ENCODE measurements at regions of chr11 and their contacts with region 1.

Region 1: GRCh38 chr11:65779851-65780577 is 762 bp downstream of the AP5B1 start:
- DNase-seq: peak; percentile 78
- H3K4me3 Mint-ChIP-seq: peak overlapping the region; percentile 96
- H3K27ac Mint-ChIP-seq: peak overlapping the region; percentile 93
- H3K4me1 Mint-ChIP-seq: no peaks in the 10 kb centered on the region
- H3K27me3 Mint-ChIP-seq: no peaks in the 10 kb centered on the region
- CTCF ChIP-seq: peak; percentile 99

Region 2: DNA sequence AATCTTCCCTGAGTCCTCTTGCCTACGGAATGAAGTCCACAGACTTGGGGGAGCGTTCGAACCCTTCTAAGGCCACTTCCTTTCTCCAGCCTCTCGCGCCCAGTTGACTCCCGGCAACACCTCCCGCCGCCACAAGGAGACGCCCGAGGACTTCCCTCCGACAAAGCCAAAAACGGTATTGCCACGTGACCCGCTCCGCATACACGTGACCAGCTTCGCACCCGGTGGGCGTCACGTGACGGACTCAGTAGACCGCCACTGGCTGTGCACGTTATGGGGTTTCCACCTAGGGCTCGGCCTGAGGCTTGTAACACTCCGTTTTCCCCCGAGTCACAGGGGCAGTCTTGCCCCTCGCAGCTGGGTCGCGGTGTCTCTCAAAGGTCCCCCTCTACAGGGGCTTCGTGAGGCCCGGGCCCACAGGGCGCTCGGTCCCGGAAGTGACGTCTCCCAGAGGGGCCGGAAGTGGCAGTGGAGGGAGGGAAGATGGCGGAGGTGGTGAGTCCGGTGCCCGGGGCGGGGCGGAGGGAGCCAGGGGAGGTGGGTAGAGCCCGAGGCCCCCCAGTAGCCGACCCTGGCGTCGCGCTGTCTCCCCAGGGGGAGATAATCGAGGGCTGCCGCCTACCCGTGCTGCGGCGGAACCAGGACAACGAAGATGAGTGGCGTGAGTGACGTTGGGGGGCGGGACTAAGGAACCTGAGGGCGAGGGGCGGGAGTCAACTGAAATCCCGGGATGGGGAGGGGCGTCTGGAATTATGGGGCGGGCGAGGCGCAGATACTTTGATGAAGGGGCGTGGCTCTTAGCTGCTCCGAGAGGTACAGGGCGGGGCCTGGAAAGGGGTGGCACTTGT is 68.0 kb before region 1 on chr11 and contains the start of gene KAT5:
- CTCF ChIA-PET with region 1: interaction called, 22 read pairs
- POLR2A ChIA-PET with region 1: interaction called, 33 read pairs
- intact Hi-C with region 1: no loop called
- DNase-seq: peak; percentile 98
- H3K4me3 Mint-ChIP-seq: peak within 1 kb of the TSS; percentile 80
- H3K27ac Mint-ChIP-seq: peak within 1 kb of the TSS; percentile 99
- H3K4me1 Mint-ChIP-seq: no peaks in the 10 kb centered on the region
- H3K27me3 Mint-ChIP-seq: no peaks in the 10 kb centered on the region
- CTCF ChIP-seq: peak; percentile 95
- total RNA-seq, gene KAT5: 37.6 and 48.1 TPM in 2 replicates

Region 3: DNA sequence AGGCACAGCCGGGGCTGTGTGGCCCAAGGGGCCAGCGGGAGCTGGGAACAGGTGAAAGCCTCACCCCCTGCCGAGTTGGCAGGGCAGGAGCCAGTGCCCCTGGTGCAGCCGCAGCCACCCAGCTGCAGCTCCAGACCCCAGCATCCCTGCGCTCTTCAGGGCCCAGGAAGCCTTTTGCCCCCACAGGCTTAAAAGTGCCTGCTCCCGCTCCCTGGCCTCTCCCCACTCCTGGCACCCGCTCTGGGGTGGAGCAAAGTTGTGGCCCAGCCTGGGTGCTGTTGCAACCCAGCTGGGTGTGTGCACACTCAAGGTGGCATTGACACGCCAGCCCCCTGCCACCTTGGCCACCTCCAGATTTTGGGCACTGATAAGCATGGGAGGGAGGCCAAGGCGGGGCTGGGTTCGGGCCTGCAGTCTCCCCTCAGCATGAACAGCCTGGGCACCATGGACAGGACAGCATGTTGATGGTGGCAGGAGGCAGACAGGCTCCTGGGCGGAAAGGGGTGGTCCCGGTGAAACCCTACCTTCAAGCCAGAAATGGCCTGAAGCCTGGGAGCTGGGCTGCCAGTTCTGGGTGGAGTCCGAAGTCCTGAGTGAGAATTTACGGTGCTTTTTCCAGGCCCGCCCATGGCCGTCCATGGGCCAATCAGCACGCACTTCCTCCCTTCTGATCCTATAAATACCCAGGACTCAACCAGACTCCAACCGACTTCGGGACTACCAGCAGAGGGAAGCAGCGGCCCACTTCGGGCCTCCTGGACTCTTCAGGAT is 35.9 kb before region 1 on chr11:
- CTCF ChIA-PET with region 1: interaction called, 16 read pairs
- POLR2A ChIA-PET with region 1: interaction called, 4 read pairs
- intact Hi-C with region 1: no loop called
- DNase-seq: peak; percentile 73
- H3K4me3 Mint-ChIP-seq: no peak overlapping the region
- H3K27ac Mint-ChIP-seq: no peak overlapping the region
- H3K4me1 Mint-ChIP-seq: no peaks in the 10 kb centered on the region
- H3K27me3 Mint-ChIP-seq: peaks cover 38% of the 10 kb centered on the region
- CTCF ChIP-seq: no peak

Region 4: GRCh38 chr11:65791691-65792213 is 11.7 kb after region 1 on chr11:
- CTCF ChIA-PET with region 1: interaction called, 41 read pairs
- POLR2A ChIA-PET with region 1: interaction called, 25 read pairs
- intact Hi-C with region 1: no loop called
- DNase-seq: no peak
- H3K4me3 Mint-ChIP-seq: no peak overlapping the region
- H3K27ac Mint-ChIP-seq: no peak overlapping the region
- H3K4me1 Mint-ChIP-seq: peaks cover 7% of the 10 kb centered on the region
- H3K27me3 Mint-ChIP-seq: peaks cover 13% of the 10 kb centered on the region
- CTCF ChIP-seq: no peak

Region 5: GRCh38 chr11:65817835-65818742 is 38.1 kb after region 1 on chr11:
- CTCF ChIA-PET with region 1: interaction called, 98 read pairs
- POLR2A ChIA-PET with region 1: interaction called, 39 read pairs
- intact Hi-C with region 1: loop called (anchors 1 kb)
- DNase-seq: peak; percentile 81
- H3K4me3 Mint-ChIP-seq: peak overlapping the region; percentile 80
- H3K27ac Mint-ChIP-seq: peak overlapping the region; percentile 78
- H3K4me1 Mint-ChIP-seq: peaks cover 4% of the 10 kb centered on the region
- H3K27me3 Mint-ChIP-seq: no peaks in the 10 kb centered on the region
- CTCF ChIP-seq: peak; percentile 99

Region 6: GRCh38 chr11:65988791-65989592 is 209.0 kb after region 1 on chr11:
- CTCF ChIA-PET with region 1: no interaction called
- POLR2A ChIA-PET with region 1: no interaction called
- intact Hi-C with region 1: loop called (anchors 1 kb)
- DNase-seq: peak; percentile 96
- H3K4me3 Mint-ChIP-seq: no peak overlapping the region
- H3K27ac Mint-ChIP-seq: no peak overlapping the region
- H3K4me1 Mint-ChIP-seq: peaks cover 5% of the 10 kb centered on the region
- H3K27me3 Mint-ChIP-seq: no peaks in the 10 kb centered on the region
- CTCF ChIP-seq: peak; percentile 93

Measured in MCF 10A (cell line).